Thyroid gland (tissue), 4 donors: ENCODE measurements at regions of chr12 and their contacts with region 1.

Region 1: GRCh38 chr12:121550974-121551634 is 29.7 kb downstream of the KDM2B start:
- DNase-seq: no peak
- H3K4me3 ChIP-seq: no peak overlapping the region
- H3K27ac ChIP-seq: no peak overlapping the region
- H3K4me1 ChIP-seq: no peaks in the 10 kb centered on the region
- H3K27me3 ChIP-seq: no peaks in the 10 kb centered on the region
- CTCF ChIP-seq: no peak
- POLR2A ChIP-seq: no peak

Region 2: GRCh38 chr12:121467115-121467793 is 83.8 kb before region 1 on chr12:
- intact Hi-C with region 1: no loop called
- DNase-seq: peak; percentile 92
- H3K4me3 ChIP-seq: peak overlapping the region in 1 of 3 donors; percentile 54
- H3K27ac ChIP-seq: peak overlapping the region in 1 of 3 donors; percentile 56
- H3K4me1 ChIP-seq: peaks cover 20 to 54% of the 10 kb centered on the region in 2 donors
- H3K27me3 ChIP-seq: no peaks in the 10 kb centered on the region
- CTCF ChIP-seq: no peak
- POLR2A ChIP-seq: peak; percentile 51 to 57

Region 3: DNA sequence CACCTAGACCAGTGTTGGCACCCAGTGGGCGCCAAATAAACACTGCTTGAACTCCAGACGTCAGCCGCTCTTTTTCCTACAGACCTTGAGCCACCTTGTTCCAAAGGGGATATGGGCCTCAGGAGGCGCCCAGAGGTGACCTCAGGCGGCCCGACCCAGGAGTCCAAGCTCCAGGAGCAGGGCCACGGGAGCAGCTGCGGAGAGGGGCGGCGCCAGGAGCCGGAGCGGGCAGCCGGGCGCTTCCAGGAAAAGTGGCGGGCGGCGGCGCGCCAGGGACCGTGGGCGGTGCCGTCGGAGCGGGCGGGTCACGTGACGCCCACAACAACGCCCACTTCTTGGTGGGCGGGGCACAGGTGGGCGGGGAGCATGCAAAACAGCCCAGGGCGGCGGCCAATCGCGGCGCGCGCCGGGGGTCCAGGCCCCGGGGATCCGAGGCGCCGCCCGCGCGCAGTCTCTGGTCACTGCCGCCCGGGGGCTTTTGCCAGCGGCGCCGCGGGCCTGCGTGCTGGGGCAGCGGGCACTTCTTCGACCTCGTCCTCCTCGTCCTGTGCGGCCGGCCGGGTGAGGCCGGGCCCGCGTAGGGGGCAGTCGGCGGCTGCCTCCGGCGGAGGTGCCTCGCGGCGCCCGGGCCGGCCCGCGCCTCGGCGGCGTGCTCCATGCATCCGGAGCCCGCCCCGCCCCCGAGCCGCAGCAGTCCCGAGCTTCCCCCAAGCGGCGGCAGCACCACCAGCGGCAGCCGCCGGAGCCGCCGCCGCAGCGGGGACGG is 75.2 kb after region 1 on chr12 and contains the start of gene ORAI1:
- intact Hi-C with region 1: loop called (anchors 10 kb)
- DNase-seq: peak; percentile 99
- H3K4me3 ChIP-seq: peak within 1 kb of the TSS; percentile 26 to 74 (median 43)
- H3K27ac ChIP-seq: peak within 1 kb of the TSS; percentile 91 to 98 (median 92)
- H3K4me1 ChIP-seq: peaks cover 26 to 41% of the 10 kb centered on the region in 2 donors
- H3K27me3 ChIP-seq: no peaks in the 10 kb centered on the region
- CTCF ChIP-seq: peak in 2 of 6 experiments; percentile 35 to 40
- POLR2A ChIP-seq: peak; percentile 66 to 97
- total RNA-seq, gene ORAI1: 12.7 to 27.1 (median 17.0) TPM

Region 4: GRCh38 chr12:121668750-121669520 is 117.8 kb after region 1 on chr12:
- intact Hi-C with region 1: loop called (anchors 5 kb)
- DNase-seq: peak; percentile 44 to 48
- H3K4me3 ChIP-seq: no peak overlapping the region
- H3K27ac ChIP-seq: no peak overlapping the region
- H3K4me1 ChIP-seq: peaks cover 0 to 6% of the 10 kb centered on the region in 2 donors
- H3K27me3 ChIP-seq: no peaks in the 10 kb centered on the region
- CTCF ChIP-seq: peak in 5 of 6 experiments; percentile 30 to 54 (median 37)
- POLR2A ChIP-seq: no peak